ENCODE measurements at regions of chr12 and their contacts with region 1.

Region 1: DNA sequence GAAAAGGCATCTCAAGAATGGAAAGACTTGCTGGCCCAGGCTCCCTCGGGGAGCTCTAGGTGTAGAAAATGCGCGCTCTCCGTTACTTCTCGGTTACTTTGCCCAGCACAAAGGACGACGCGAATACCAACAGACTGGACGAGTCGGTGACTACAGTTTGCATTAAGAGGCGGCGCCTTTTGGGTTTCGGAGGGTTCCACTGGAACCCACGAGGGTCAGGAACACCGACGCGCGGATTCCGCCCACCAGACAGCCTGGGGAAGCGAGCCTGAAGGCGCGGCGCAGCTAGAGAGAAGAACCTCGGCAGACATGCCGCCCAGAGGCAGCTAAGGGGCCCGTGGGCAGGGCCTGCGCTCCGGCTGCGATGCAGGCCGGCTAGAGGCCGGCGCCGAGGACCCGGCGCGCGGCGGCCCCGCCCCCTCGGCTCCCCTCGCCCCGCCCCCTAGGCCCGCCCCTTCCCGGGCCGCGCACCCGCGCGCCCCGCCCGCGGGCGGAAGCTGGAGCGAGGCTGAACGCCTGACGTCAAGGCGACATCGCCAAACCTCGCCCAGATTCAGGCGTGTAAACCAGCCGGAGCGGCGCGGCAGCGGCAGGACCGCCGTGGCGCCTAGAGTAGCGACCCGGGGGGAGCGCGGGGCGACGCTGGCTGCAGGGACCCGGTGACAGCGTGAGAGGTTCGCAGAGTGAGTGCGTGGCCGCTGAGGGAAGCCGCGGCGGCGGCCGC is at the start of gene RAP1B:
- DNase-seq: peak; percentile 97
- H3K4me3 Mint-ChIP-seq: peak within 1 kb of the TSS; percentile 99
- H3K27ac Mint-ChIP-seq: peak within 1 kb of the TSS; percentile 98
- H3K4me1 Mint-ChIP-seq: peaks cover 37% of the 10 kb centered on the region
- H3K27me3 Mint-ChIP-seq: no peaks in the 10 kb centered on the region
- total RNA-seq, gene RAP1B: 207 and 209 TPM in 2 replicates

Region 2: GRCh38 chr12:68331869-68332727 is 278.4 kb before region 1 on chr12 and contains the start of gene MDM1:
- intact Hi-C with region 1: loop called (anchors 10 kb)
- DNase-seq: peak; percentile 98
- H3K4me3 Mint-ChIP-seq: peak within 1 kb of the TSS; percentile 88
- H3K27ac Mint-ChIP-seq: peak within 1 kb of the TSS; percentile 81
- H3K4me1 Mint-ChIP-seq: peaks cover 37% of the 10 kb centered on the region
- H3K27me3 Mint-ChIP-seq: peaks cover 9% of the 10 kb centered on the region
- total RNA-seq, gene MDM1: 23.2 and 24.9 TPM in 2 replicates

Region 3: DNA sequence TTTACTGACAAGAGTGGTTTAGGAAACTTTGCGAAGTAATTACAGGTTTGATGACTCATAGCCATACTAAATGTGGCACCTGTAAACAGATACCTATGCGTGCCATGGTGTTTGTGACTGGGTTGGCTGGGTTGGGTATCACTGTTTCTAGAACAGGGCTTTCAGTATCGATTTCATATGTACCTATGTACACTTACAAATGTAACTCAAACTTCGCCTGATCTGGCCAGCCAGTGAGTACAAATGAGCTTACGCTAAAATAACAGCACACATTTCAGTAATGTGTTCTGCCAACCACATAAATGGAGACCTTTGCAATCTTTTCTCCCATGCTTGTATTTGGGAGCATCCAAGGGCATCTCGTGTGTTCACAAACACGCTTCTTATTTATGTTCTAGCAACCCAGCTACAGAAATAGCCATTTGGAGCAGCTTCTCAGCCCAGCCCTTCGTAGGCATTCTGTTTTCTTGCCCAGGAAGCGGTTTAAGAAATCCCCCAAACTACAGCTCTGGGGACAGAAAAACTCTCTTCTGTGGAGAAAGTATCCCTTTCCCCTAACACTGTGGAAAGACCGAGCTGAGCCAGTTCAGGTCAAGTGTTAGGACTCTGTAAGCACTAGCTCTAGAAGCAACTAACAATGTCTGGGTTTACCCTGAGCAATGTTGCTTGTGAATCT is 236.1 kb before region 1 on chr12:
- intact Hi-C with region 1: loop called (anchors 2 kb)
- DNase-seq: peak; percentile 87
- H3K4me3 Mint-ChIP-seq: peak overlapping the region; percentile 68
- H3K27ac Mint-ChIP-seq: peak overlapping the region; percentile 90
- H3K4me1 Mint-ChIP-seq: peaks cover 41% of the 10 kb centered on the region
- H3K27me3 Mint-ChIP-seq: no peaks in the 10 kb centered on the region

Region 4: GRCh38 chr12:68497702-68498101 is 112.8 kb before region 1 on chr12:
- intact Hi-C with region 1: loop called (anchors 1 kb)
- DNase-seq: peak; percentile 69
- H3K4me3 Mint-ChIP-seq: peak overlapping the region; percentile 66
- H3K27ac Mint-ChIP-seq: peak overlapping the region; percentile 89
- H3K4me1 Mint-ChIP-seq: peaks cover 34% of the 10 kb centered on the region
- H3K27me3 Mint-ChIP-seq: no peaks in the 10 kb centered on the region

Region 5: DNA sequence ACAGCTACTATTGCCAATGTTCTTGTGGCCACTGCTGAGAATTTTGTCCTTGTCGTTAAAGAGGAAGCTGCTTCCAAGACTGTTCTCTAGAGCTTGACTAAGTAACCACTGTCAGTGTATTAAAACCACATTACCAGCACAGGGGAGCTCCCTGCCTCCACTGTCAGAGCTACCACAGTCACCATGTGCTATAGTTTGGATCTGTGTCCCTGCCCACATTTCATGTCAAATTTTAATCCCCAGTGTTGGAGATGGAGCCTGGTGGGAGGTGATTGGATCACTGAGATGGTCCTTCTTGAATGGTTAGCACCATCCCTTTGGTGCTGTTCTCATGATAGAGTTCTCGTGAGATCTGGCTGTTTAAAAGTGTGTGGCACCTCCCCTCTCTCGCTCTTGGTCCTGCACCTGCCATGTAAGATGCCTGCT is 23.1 kb before region 1 on chr12:
- intact Hi-C with region 1: loop called (anchors 1 kb)
- DNase-seq: peak; percentile 84
- H3K4me3 Mint-ChIP-seq: peak overlapping the region; percentile 16
- H3K27ac Mint-ChIP-seq: peak overlapping the region; percentile 74
- H3K4me1 Mint-ChIP-seq: peaks cover 36% of the 10 kb centered on the region
- H3K27me3 Mint-ChIP-seq: no peaks in the 10 kb centered on the region

Region 6: DNA sequence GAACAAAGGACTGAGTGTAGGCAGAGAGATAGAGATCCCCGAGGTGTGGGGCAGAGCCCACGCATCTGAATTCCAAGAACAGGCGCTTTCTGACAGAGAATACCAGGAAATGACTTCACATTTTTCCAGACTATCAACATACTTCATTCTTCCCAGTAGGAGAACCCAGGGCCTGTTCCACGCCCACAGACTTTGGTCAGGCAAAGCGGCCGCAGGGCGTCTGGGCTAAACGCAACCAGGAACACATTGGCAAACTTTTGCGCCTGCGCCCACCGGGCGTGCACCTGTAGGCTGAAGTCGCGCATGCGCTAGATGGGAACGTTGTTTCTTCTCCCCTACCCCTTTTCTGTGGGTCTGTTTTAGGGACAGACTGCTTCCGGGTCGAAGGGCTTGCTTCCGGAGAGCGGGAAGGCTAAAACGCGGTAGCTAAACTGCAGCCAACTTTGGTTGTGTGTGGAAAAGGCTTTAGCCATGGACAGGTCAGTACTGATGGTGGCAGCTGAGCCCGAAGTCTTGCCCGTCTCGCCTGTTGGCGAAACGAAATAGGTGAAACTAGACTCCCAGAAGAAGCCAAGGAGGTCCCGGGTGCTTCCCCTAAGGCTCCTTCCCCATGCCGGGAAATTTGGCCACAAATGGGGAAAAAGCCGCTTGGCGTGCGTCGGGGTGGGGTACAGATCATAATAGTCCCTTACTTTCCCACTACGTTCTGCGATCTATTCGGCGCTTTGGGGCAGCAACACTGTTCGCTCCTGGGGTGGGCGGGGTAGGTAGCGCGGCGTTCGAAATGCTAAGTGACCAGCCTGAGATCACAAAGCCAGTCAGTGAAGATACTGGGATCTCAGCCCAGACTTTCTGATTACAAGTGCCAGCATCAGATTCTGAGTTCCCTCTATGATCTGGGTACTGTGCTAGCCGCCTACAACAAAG is 76.3 kb after region 1 on chr12 and contains the start of gene NUP107:
- intact Hi-C with region 1: loop called (anchors 2 kb)
- DNase-seq: peak; percentile 99
- H3K4me3 Mint-ChIP-seq: peak within 1 kb of the TSS; percentile 95
- H3K27ac Mint-ChIP-seq: peak within 1 kb of the TSS; percentile 92
- H3K4me1 Mint-ChIP-seq: peaks cover 33% of the 10 kb centered on the region
- H3K27me3 Mint-ChIP-seq: no peaks in the 10 kb centered on the region
- total RNA-seq, gene NUP107: 127 and 128 TPM in 2 replicates

Region 7: DNA sequence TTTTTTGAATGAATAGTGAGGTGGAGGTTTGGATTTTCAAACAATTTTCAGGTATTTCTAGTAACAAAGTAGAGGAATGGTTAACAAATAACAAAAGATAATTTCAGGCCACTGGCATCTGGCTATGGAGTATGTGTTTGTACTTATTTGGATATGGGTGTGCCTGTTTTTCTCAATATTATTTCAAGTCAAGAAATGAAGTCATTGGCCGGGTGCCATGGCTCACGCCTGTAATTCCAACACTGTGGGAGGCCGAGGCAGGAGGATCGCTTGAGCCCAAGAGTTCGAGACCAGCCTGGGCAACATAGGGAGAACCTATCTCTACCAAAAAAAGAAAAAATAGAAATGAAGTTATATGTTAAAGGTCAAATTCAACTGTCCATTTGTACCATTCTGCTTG is 149.3 kb after region 1 on chr12:
- intact Hi-C with region 1: no loop called
- DNase-seq: no peak
- H3K4me3 Mint-ChIP-seq: no peak overlapping the region
- H3K27ac Mint-ChIP-seq: no peak overlapping the region
- H3K4me1 Mint-ChIP-seq: no peaks in the 10 kb centered on the region
- H3K27me3 Mint-ChIP-seq: no peaks in the 10 kb centered on the region

Measured in activated CD4-positive, alpha-beta T cell treated with anti-CD3 and anti-CD28 coated beads, Interleukin-2, amount 10 ng/mL, durations not matched to agents 24 days and 14 days (primary cell).